ENCODE measurements at regions of chr16 and their contacts with region 1.

Region 1: GRCh38 chr16:68590201-68590994 is 51.3 kb downstream of the ZFP90 start:
- DNase-seq: peak; percentile 91
- H3K4me3 ChIP-seq: no peak overlapping the region; a peak in 1 of 4 replicates
- H3K27ac ChIP-seq: no peak overlapping the region
- H3K4me1 ChIP-seq: no peaks in the 10 kb centered on the region
- H3K27me3 ChIP-seq: no peaks in the 10 kb centered on the region
- CTCF ChIP-seq: peak; percentile 25; the same call in 1 of the 2 replicates
- EP300 ChIP-seq: no peak
- RAD21 ChIP-seq: peak; percentile 79

Region 2: DNA sequence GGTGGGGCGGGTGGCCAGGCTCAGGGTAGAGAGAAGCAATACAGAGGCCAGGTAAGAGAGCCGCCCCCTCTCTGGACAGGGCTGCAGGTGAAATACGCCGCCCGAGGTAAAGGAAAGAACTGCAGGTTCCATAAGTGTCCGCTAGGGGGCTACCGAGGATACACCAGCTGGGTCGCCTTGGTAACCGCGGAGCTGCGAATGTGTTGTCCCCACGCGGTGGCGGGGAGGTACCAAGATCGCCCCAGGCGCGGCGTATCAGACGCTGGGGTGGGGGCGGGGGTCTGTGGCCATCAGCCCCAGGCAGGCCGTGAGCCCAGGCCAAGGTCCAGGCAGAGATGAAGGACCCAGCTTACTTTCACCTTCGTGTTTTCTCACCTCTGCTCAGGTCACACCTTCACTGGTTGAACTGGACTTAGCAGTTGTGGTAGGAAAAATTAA is 69.7 kb before region 1 on chr16:
- CTCF ChIA-PET with region 1: interaction called, 15 read pairs
- POLR2A ChIA-PET with region 1: no interaction called
- DNase-seq: peak; percentile 94
- H3K4me3 ChIP-seq: peak overlapping the region; percentile 30 to 56
- H3K27ac ChIP-seq: no peak overlapping the region
- H3K4me1 ChIP-seq: peaks cover 0 to 4% of the 10 kb centered on the region in 2 experiments; a peak in 1 of 4 replicates
- H3K27me3 ChIP-seq: no peaks in the 10 kb centered on the region
- CTCF ChIP-seq: peak; percentile 89
- EP300 ChIP-seq: 0 out of 4 replicates have a peak, but pooled peaks of 1 of the 2 experiments have one; percentile 11
- RAD21 ChIP-seq: peak; percentile 66

Region 3: DNA sequence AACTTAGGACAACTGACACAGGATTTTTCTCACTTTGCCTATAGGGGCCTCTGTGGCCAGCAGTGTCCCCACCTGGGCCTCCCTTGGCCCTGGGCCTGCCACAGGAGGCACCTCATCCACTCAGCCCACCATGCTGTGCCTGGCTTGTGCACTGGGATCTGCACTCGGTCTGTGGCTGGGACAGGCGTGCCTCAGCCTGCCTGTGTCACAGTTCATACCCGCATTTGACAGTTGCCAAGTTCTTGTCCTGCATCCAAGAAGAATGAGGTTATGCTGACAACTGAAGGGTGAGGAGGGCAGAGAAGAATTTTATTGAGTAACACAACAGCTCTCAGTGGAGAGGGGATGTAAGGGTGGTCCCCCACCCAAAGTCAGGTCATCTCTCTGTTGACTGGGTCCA is 15.3 kb before region 1 on chr16:
- CTCF ChIA-PET with region 1: interaction called, 24 read pairs
- POLR2A ChIA-PET with region 1: interaction called, 4 read pairs
- DNase-seq: no peak
- H3K4me3 ChIP-seq: no peak overlapping the region
- H3K27ac ChIP-seq: no peak overlapping the region
- H3K4me1 ChIP-seq: no peaks in the 10 kb centered on the region
- H3K27me3 ChIP-seq: no peaks in the 10 kb centered on the region
- CTCF ChIP-seq: no peak
- EP300 ChIP-seq: no peak
- RAD21 ChIP-seq: no peak

Region 4: GRCh38 chr16:68644715-68645493 is 54.5 kb after region 1 on chr16 and contains the start of gene CDH3:
- CTCF ChIA-PET with region 1: interaction called, 10 read pairs
- POLR2A ChIA-PET with region 1: no interaction called
- DNase-seq: peak; percentile 64
- H3K4me3 ChIP-seq: peak within 1 kb of the TSS in 1 of 2 experiments; percentile 15; a peak in 1 of 4 replicates
- H3K27ac ChIP-seq: no peak within 1 kb of the TSS
- H3K4me1 ChIP-seq: peaks cover 0 to 10% of the 10 kb centered on the region in 2 experiments; a peak in 1 of 4 replicates
- H3K27me3 ChIP-seq: peaks cover 33% of the 10 kb centered on the region
- CTCF ChIP-seq: no peak
- EP300 ChIP-seq: no peak
- RAD21 ChIP-seq: no peak
- polyA plus RNA-seq, gene CDH3: not detected in 2 replicates

Region 5: DNA sequence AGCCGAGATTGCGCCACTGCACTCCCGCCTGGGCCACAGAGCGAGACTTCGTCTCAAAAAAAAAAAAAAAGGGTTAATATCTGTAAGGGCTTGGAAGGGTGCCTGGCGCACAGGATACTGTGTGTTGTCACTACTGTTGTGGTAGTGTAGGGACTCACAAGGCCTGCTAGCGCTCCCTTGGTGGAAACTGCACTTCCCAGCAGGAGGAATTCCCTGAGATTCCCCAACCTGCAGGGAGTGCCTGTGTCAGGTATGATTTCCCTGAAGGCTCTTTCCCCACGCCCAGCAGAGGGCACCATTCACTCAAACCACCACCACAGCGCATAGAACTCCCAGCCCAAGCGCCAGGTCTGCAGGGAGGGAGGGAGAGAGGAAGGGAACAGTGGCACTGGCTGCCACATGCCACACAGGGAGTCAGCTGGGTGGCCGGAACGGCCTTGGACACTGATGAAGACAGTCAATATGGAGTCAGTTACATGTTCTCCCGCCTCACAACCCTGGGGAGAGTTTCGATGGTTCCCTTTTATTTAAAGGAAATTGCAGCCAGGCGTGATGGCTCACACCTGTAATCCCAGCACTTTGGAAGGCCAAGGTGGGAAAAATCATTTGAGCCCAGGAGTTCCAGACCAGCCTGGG is 114.0 kb after region 1 on chr16:
- CTCF ChIA-PET with region 1: interaction called, 10 read pairs
- POLR2A ChIA-PET with region 1: no interaction called
- DNase-seq: peak; percentile 85
- H3K4me3 ChIP-seq: no peak overlapping the region; a peak in 1 of 4 replicates
- H3K27ac ChIP-seq: no peak overlapping the region
- H3K4me1 ChIP-seq: no peaks in the 10 kb centered on the region
- H3K27me3 ChIP-seq: no peaks in the 10 kb centered on the region
- CTCF ChIP-seq: peak; percentile 60
- EP300 ChIP-seq: no peak
- RAD21 ChIP-seq: peak; percentile 89

Region 6: DNA sequence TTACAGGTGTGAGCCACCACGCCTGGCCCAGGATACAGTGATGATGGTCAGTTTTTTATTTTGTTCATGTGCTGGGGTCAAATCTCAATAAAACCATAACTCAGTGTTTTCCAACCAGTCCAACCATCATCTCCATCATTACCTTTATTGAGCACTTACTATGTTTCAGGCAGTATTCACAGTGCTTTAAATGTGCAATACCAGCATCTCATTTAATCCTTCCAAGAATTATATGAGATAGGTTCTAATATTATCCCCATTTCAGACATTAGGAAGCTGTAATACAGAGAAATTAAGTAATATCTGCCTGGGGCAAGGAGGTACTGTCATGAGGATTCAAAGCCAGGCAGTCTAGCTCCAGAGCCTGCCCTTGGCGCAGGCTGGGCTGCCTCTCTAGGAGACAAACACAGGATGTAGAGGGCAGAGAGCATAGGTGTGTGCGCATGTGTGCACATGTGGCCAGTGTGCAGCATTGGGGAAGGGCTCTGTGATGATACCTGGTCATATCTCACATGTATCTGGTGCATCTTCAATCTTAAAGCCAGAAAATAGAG is 216.1 kb after region 1 on chr16:
- CTCF ChIA-PET with region 1: interaction called, 52 read pairs
- POLR2A ChIA-PET with region 1: no interaction called
- DNase-seq: no peak
- H3K4me3 ChIP-seq: no peak overlapping the region
- H3K27ac ChIP-seq: no peak overlapping the region
- H3K4me1 ChIP-seq: no peaks in the 10 kb centered on the region
- H3K27me3 ChIP-seq: no peaks in the 10 kb centered on the region
- CTCF ChIP-seq: no peak
- EP300 ChIP-seq: no peak
- RAD21 ChIP-seq: no peak

Region 7: GRCh38 chr16:69123910-69124309 is 533.5 kb after region 1 on chr16:
- CTCF ChIA-PET with region 1: interaction called, 14 read pairs
- POLR2A ChIA-PET with region 1: interaction called, 4 read pairs
- DNase-seq: peak; percentile 65
- H3K4me3 ChIP-seq: no peak overlapping the region
- H3K27ac ChIP-seq: no peak overlapping the region
- H3K4me1 ChIP-seq: no peaks in the 10 kb centered on the region
- H3K27me3 ChIP-seq: no peaks in the 10 kb centered on the region
- CTCF ChIP-seq: peak; percentile 82
- EP300 ChIP-seq: no peak
- RAD21 ChIP-seq: peak; percentile 89

Measured in SK-N-SH (cell line).